PC-9 (cell line): ENCODE measurements at regions of chr16 and their contacts with region 1.

Region 1: DNA sequence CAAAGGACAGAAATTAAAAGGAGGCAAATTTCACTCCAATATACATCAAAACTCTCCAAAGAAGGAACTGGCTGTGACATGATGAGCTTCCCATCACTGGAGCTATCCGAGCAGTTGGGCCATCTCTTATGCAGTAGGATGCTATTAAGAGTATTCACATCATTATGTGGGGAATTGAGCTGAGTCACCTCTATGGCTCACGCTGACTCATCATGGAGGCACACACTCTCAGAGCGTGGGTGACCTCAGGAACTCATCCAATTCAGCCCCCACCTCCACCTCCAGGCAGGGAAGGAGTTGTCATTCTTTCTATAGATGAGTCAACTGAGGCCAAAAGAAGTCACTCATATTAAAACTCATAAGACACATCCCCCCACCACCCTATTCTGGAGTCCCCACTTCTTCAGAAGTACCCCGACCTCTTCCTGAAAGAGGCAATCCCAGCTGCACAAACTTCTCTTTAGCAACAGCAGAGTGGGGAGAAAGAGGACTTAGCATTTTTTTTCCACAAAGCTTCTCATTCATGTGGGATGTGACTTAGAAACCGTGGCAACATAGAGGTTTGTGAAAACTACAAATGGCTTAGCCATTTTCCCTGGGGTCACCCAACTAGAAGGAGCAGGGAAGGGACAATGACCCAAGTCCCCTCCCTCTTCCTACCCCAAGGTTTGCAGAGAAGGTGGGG is 32.5 kb downstream of the ABCC12 start:
- DNase-seq: peak; percentile 79 to 92
- H3K4me3 ChIP-seq: no peak overlapping the region
- H3K27ac ChIP-seq: peak overlapping the region; percentile 84
- H3K4me1 ChIP-seq: peaks cover 55% of the 10 kb centered on the region
- H3K27me3 ChIP-seq: no peaks in the 10 kb centered on the region
- CTCF ChIP-seq: no peak

Region 2: DNA sequence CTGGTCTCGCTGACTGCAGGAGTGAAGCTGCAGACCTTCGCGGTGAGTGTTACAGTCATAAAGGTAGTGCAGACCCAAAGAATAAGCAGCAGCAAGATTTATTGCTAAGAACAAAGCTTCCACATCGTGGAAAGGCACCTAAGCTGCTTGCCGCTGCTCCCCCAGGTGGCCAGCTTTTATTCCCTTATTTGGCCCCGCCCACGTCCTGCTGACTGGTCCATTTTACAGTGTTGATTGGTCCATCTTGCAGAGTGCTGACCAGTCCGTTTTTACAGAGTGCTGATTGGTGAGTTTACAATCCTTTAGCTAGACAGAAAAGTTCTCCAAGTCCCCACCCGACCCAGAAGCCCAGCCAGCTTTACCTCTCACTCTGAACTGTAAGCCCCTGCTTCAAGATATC is 195.2 kb before region 1 on chr16:
- CTCF ChIA-PET with region 1: no interaction called
- POLR2A ChIA-PET with region 1: no interaction called
- intact Hi-C with region 1: loop called (anchors 1 kb)
- DNase-seq: no peak
- H3K4me3 ChIP-seq: no peak overlapping the region
- H3K27ac ChIP-seq: no peak overlapping the region
- H3K4me1 ChIP-seq: peaks cover 23% of the 10 kb centered on the region
- H3K27me3 ChIP-seq: no peaks in the 10 kb centered on the region
- CTCF ChIP-seq: no peak

Region 3: GRCh38 chr16:47939690-47940089 is 183.6 kb before region 1 on chr16:
- CTCF ChIA-PET with region 1: no interaction called
- POLR2A ChIA-PET with region 1: no interaction called
- intact Hi-C with region 1: no loop called
- DNase-seq: no peak
- H3K4me3 ChIP-seq: no peak overlapping the region
- H3K27ac ChIP-seq: no peak overlapping the region
- H3K4me1 ChIP-seq: no peaks in the 10 kb centered on the region
- H3K27me3 ChIP-seq: no peaks in the 10 kb centered on the region
- CTCF ChIP-seq: no peak